HCT116 (cell line): ENCODE measurements at regions of chr1 and their contacts with region 1.

Region 1: DNA sequence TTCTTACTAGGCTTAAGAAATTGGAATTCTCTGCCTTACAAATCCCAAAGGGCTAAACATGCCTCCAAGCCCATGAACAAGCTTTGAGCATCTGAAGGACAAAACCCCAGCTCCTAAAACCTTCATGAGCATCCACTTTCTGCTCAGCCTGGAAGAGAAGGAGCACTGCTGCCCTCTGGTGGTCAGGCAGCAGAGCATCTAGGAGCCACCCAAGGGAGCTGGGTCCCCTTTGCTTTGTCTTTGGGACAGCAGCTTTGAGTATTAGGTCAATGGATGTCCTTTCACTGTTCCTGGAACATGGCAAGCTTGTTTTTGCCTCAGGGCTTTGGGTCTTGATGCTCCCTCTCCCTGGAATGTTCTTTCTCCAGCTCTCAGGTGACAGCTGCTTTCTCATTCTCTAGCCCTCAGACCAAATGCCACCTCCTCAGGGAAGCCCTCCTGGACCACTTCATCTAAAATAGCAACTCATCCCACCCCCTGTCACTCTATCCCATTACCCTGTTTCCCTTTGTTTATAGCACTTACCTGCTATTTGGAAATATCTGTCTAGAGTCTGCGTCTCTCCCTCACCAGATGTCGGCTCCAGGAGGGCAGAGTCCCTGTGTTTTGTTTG is 25.7 kb downstream of the RAB7B start:
- DNase-seq: peak; percentile 68
- ATAC-seq: peak; percentile 94
- H3K4me3 ChIP-seq: no peak overlapping the region
- H3K27ac ChIP-seq: no peak overlapping the region
- H3K4me1 ChIP-seq: peaks cover 6 to 10% of the 10 kb centered on the region in 2 experiments; a peak in 3 of 4 replicates
- H3K27me3 ChIP-seq: no peaks in the 10 kb centered on the region
- CTCF ChIP-seq: peak; percentile 96 to 98 (median 97)
- POLR2A ChIP-seq: no peak
- RAD21 ChIP-seq: peak; percentile 98

Region 2: DNA sequence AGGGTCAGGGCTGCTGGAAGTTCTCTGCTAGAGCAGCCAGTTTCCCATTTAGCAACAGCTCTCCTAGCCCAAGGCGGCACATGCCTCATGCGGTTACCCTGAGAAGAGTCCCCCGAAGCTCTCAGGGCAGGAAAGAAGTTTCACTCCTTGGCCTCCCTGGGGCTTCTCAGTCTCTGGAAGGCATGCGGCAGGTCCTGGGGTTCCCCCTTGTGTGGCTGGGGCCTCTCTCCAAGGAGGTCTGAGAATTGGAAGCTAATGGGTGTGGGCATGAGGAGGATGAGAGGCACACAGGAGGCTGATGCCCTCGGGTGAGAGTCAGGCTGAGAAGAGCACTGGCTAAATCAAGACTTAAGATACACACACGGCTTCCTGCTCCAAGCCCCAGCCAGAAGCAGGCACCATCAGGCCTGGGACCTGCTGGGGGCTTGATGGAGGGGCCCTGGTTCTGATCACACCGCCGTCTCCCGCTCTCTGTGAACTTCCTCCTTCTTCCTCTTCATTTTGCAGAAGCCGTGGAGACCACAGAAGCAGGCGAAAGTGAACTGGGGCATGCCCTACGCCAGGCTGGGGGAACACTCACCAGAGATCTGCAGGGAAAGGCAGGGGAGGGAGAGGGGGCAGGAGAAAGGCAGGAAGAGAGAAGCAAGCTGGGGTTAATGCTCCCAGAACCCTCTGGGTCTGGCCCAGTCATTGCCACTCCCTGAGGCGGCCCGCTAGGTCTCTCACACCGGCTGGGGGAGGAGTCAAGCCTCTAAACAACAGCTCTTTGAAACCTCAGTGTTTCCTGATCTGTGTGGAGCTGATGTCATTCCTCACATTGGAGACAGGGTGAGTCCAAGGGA is 536.8 kb before region 1 on chr1:
- CTCF ChIA-PET with region 1: no interaction called
- POLR2A ChIA-PET with region 1: no interaction called
- RAD21 ChIA-PET with region 1: no interaction called
- intact Hi-C with region 1: no loop called
- DNase-seq: peak; percentile 85
- ATAC-seq: peak; percentile 86
- H3K4me3 ChIP-seq: peak overlapping the region in 1 of 2 experiments; percentile 21; a peak in 1 of 4 replicates
- H3K27ac ChIP-seq: peak overlapping the region; percentile 80
- H3K4me1 ChIP-seq: peaks cover 54 to 76% of the 10 kb centered on the region in 2 experiments
- H3K27me3 ChIP-seq: no peaks in the 10 kb centered on the region
- CTCF ChIP-seq: no peak
- POLR2A ChIP-seq: no peak
- RAD21 ChIP-seq: no peak

Region 3: DNA sequence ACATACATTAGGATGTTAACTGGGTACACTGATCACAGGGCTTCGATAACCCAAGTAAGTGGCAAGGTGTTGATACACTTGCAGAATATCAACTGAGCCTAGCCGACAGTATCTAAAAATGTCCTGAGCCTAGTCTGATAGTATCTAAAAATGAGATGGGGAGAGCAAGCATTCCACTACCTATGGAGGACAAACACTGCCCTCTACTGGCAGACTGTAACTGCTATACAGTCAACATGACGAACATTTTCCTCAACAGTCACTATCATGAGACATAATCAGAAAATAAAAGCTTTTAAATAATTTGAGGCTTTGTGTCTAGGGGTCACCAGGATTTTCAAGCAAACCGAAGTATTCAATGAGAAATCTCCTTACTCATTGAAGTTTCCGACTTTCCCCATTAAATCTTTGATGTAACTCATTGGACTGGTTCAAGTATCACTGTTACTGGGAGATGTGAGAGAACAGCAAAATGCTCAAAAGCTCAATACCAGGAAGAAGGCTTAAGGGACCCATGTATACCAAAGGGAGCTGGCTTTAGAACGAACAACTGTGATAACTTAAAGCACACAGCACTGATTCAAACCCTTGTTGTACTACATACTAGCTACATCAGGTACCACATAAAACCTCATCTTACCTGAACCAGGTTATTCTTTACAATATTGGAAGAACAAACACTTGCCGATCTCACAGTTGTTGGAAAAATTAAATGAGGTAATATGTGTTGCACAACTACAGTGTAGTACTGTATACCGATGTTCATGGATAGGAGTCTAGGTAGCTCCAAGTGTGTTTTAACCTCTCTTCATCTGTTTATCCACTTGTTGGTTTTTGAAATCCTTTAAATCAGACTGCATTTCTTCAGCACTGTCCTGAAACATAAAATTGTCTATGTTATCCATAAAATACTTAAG is 266.1 kb before region 1 on chr1:
- CTCF ChIA-PET with region 1: interaction called, 10 read pairs
- POLR2A ChIA-PET with region 1: no interaction called
- RAD21 ChIA-PET with region 1: no interaction called
- intact Hi-C with region 1: no loop called
- DNase-seq: peak; percentile 68
- ATAC-seq: peak; percentile 93
- H3K4me3 ChIP-seq: no peak overlapping the region
- H3K27ac ChIP-seq: no peak overlapping the region
- H3K4me1 ChIP-seq: no peaks in the 10 kb centered on the region
- H3K27me3 ChIP-seq: no peaks in the 10 kb centered on the region
- CTCF ChIP-seq: peak; percentile 86 to 92 (median 90)
- POLR2A ChIP-seq: no peak
- RAD21 ChIP-seq: peak; percentile 93

Region 4: GRCh38 chr1:205907794-205908193 is 69.7 kb before region 1 on chr1:
- CTCF ChIA-PET with region 1: interaction called, 23 read pairs
- POLR2A ChIA-PET with region 1: no interaction called
- RAD21 ChIA-PET with region 1: no interaction called
- intact Hi-C with region 1: no loop called
- DNase-seq: peak; percentile 39
- ATAC-seq: peak; percentile 95
- H3K4me3 ChIP-seq: no peak overlapping the region
- H3K27ac ChIP-seq: no peak overlapping the region
- H3K4me1 ChIP-seq: no peaks in the 10 kb centered on the region
- H3K27me3 ChIP-seq: peaks cover 3% of the 10 kb centered on the region; the same call in 1 of the 2 replicates
- CTCF ChIP-seq: peak; percentile 66 to 82 (median 78)
- POLR2A ChIP-seq: no peak
- RAD21 ChIP-seq: peak; percentile 70

Region 5: DNA sequence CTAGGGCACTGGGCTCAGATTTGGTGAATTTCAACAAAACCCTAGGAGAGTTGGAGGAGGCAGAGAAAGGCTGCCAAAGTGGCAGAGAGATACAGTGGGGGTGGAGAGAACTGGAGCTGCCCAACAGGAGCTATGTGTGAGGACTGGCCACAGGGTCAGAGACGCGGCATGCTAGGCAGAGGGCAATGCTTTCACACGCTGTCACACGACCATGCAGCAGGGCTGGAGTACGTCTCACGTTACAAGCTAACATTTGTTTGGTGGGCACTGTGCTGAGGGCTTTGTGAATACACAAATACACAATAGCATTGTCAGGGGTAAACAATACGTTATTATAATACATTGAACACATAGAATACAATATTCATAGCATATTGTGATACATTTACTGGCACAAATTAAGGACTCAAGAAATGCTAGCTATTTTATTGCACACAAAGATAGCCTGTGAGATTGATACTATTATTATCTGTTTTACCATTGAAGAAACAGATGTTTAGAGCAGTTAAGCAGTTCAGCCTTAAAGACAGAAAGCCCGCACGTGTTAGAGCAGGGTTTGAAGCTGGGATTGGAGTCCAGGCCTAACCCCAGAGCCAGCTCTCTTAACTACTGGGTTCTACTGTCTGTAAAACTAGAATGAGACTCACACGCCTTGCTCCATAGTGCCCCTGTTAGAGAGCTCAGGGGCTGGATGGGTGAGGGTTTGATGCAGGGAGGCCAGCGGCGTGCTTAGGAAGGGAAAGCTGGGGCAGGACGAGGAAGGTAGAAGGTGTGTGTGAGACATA is 21.1 kb after region 1 on chr1:
- CTCF ChIA-PET with region 1: interaction called, 10 read pairs
- POLR2A ChIA-PET with region 1: no interaction called
- RAD21 ChIA-PET with region 1: no interaction called
- intact Hi-C with region 1: no loop called
- DNase-seq: no peak
- ATAC-seq: no peak
- H3K4me3 ChIP-seq: no peak overlapping the region
- H3K27ac ChIP-seq: no peak overlapping the region
- H3K4me1 ChIP-seq: peaks cover 28 to 36% of the 10 kb centered on the region in 2 experiments
- H3K27me3 ChIP-seq: no peaks in the 10 kb centered on the region
- CTCF ChIP-seq: no peak
- POLR2A ChIP-seq: no peak
- RAD21 ChIP-seq: no peak

Region 6: GRCh38 chr1:206117151-206117948 is 139.8 kb after region 1 on chr1 and contains the start of gene AVPR1B:
- CTCF ChIA-PET with region 1: no interaction called
- POLR2A ChIA-PET with region 1: no interaction called
- RAD21 ChIA-PET with region 1: no interaction called
- intact Hi-C with region 1: no loop called
- DNase-seq: no peak
- ATAC-seq: peak; percentile 91
- H3K4me3 ChIP-seq: peak within 1 kb of the TSS; percentile 19 to 48
- H3K27ac ChIP-seq: no peak within 1 kb of the TSS
- H3K4me1 ChIP-seq: peaks cover 0 to 10% of the 10 kb centered on the region in 2 experiments; a peak in 1 of 4 replicates
- H3K27me3 ChIP-seq: no peaks in the 10 kb centered on the region
- CTCF ChIP-seq: peak in 1 of 3 experiments; percentile 7; a peak in 1 of 6 replicates
- POLR2A ChIP-seq: no peak
- RAD21 ChIP-seq: no peak
- total RNA-seq, gene AVPR1B: not detected